ENCODE measurements at regions of chrX and their contacts with region 1.

Region 1: GRCh38 chrX:102950908-102951866 is 14.1 kb downstream of the RAB40AL start:
- DNase-seq: peak; percentile 27
- ATAC-seq: peak; percentile 86
- H3K4me3 ChIP-seq: no peak overlapping the region
- H3K27ac ChIP-seq: no peak overlapping the region
- H3K4me1 ChIP-seq: no peaks in the 10 kb centered on the region
- H3K27me3 ChIP-seq: peaks cover 2% of the 10 kb centered on the region; the same call in 1 of the 2 replicates
- CTCF ChIP-seq: peak; percentile 59
- POLR2A ChIP-seq: no peak
- RAD21 ChIP-seq: peak; percentile 49

Region 2: DNA sequence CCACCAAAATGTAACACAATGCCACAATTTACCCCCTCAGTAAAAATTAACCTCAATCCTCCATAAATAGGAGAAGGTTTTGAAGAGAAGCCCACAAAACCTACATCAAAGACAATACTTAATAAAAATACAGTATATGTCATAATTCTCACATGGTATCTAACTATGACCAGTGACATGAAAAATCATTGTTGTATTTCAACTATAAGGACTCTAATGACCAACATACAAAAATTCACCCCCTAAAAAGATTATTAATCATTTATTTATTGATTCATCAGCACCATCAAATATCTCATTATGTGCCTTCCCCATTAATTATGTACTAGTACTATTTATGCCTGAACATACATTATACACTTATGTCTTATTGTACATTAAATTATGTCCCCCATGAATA is 942.3 kb before region 1 on chrX:
- CTCF ChIA-PET with region 1: no interaction called
- POLR2A ChIA-PET with region 1: no interaction called
- dilution Hi-C with region 1: no loop called
- in situ Hi-C with region 1: no loop called
- intact Hi-C with region 1: no loop called
- DNase-seq: no peak
- ATAC-seq: no peak
- H3K4me3 ChIP-seq: no peak overlapping the region
- H3K27ac ChIP-seq: no peak overlapping the region
- H3K4me1 ChIP-seq: no peaks in the 10 kb centered on the region
- H3K27me3 ChIP-seq: no peaks in the 10 kb centered on the region
- CTCF ChIP-seq: no peak
- POLR2A ChIP-seq: no peak
- RAD21 ChIP-seq: no peak

Region 3: GRCh38 chrX:102840871-102841705 is 110.1 kb before region 1 on chrX:
- CTCF ChIA-PET with region 1: no interaction called
- POLR2A ChIA-PET with region 1: no interaction called
- dilution Hi-C with region 1: no loop called
- in situ Hi-C with region 1: no loop called
- intact Hi-C with region 1: no loop called
- DNase-seq: peak; percentile 34
- ATAC-seq: no peak
- H3K4me3 ChIP-seq: no peak overlapping the region
- H3K27ac ChIP-seq: no peak overlapping the region
- H3K4me1 ChIP-seq: no peaks in the 10 kb centered on the region
- H3K27me3 ChIP-seq: no peaks in the 10 kb centered on the region; the same call in 1 of the 2 replicates
- CTCF ChIP-seq: 0 out of 2 replicates have a peak, but pooled peaks have one; percentile 9
- POLR2A ChIP-seq: no peak
- RAD21 ChIP-seq: no peak

Region 4: DNA sequence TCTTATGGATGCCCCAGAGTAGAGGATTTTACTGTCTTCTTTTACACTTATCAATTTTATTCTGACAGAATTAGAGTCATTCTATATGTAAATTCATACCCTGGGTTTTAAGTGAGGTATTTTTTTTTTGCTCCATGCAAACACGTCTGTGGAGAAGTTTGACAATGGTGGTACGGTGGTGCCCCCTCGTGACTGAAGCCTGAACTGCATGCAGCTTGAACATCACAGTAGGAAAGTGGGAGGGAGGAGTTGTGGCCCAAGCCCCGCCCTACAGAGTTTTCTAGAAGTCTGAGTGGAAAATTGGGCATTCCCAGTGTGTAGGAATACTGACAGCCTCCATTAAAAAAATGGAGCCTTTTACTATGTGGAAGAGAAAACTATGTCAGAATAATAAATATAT is 87.5 kb before region 1 on chrX:
- CTCF ChIA-PET with region 1: no interaction called
- POLR2A ChIA-PET with region 1: no interaction called
- dilution Hi-C with region 1: no loop called
- in situ Hi-C with region 1: no loop called
- intact Hi-C with region 1: no loop called
- DNase-seq: peak; percentile 74
- ATAC-seq: peak; percentile 100
- H3K4me3 ChIP-seq: no peak overlapping the region
- H3K27ac ChIP-seq: no peak overlapping the region
- H3K4me1 ChIP-seq: no peaks in the 10 kb centered on the region
- H3K27me3 ChIP-seq: no peaks in the 10 kb centered on the region
- CTCF ChIP-seq: peak; percentile 85
- POLR2A ChIP-seq: no peak
- RAD21 ChIP-seq: peak; percentile 83

Region 5: DNA sequence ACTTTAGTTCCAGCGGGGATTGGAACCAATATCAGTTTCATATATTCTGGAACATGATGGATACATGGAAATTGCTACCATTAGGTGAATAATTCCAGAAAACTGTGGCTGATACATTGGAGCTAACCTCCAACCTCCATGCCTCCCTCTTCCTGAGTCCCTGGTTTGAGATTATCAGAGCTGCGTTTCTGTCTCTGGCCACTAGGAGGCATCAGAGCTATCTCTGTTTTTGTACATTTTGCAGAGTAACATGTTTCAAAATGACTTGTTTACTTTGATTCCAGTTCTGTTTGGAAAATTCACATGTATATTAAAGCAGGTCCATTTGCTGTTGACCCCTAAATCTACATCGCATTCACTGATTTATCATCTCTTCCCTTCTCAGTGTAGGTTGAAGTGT is 16.6 kb before region 1 on chrX:
- CTCF ChIA-PET with region 1: interaction called, 12 read pairs
- POLR2A ChIA-PET with region 1: no interaction called
- dilution Hi-C with region 1: no loop called
- in situ Hi-C with region 1: no loop called
- intact Hi-C with region 1: no loop called
- DNase-seq: peak; percentile 4
- ATAC-seq: peak; percentile 49; the same call in 1 of the 2 replicates
- H3K4me3 ChIP-seq: no peak overlapping the region
- H3K27ac ChIP-seq: no peak overlapping the region
- H3K4me1 ChIP-seq: no peaks in the 10 kb centered on the region
- H3K27me3 ChIP-seq: no peaks in the 10 kb centered on the region
- CTCF ChIP-seq: peak; percentile 45
- POLR2A ChIP-seq: no peak
- RAD21 ChIP-seq: peak; percentile 16; the same call in 1 of the 2 replicates

Region 6: GRCh38 chrX:103063918-103064434 is 112.8 kb after region 1 on chrX and contains the start of gene BEX1:
- CTCF ChIA-PET with region 1: no interaction called
- POLR2A ChIA-PET with region 1: no interaction called
- dilution Hi-C with region 1: no loop called
- in situ Hi-C with region 1: no loop called
- intact Hi-C with region 1: no loop called
- DNase-seq: no peak
- ATAC-seq: no peak
- H3K4me3 ChIP-seq: no peak within 1 kb of the TSS
- H3K27ac ChIP-seq: no peak within 1 kb of the TSS
- H3K4me1 ChIP-seq: no peaks in the 10 kb centered on the region
- H3K27me3 ChIP-seq: no peaks in the 10 kb centered on the region; the same call in 1 of the 2 replicates
- CTCF ChIP-seq: no peak
- POLR2A ChIP-seq: no peak
- RAD21 ChIP-seq: no peak
- total RNA-seq, gene BEX1: 0.18 TPM in 1 of 2 replicates, not detected in the other

Region 7: GRCh38 chrX:103157496-103158320 is 206.5 kb after region 1 on chrX:
- CTCF ChIA-PET with region 1: interaction called, 5 read pairs
- POLR2A ChIA-PET with region 1: no interaction called
- dilution Hi-C with region 1: no loop called
- in situ Hi-C with region 1: loop called (anchors 10 kb)
- intact Hi-C with region 1: loop called (anchors 1 kb)
- DNase-seq: peak; percentile 27
- ATAC-seq: peak; percentile 75
- H3K4me3 ChIP-seq: no peak overlapping the region
- H3K27ac ChIP-seq: no peak overlapping the region
- H3K4me1 ChIP-seq: no peaks in the 10 kb centered on the region
- H3K27me3 ChIP-seq: peaks cover 4% of the 10 kb centered on the region
- CTCF ChIP-seq: peak; percentile 59
- POLR2A ChIP-seq: no peak
- RAD21 ChIP-seq: peak; percentile 31; the same call in 1 of the 2 replicates

Region 8: GRCh38 chrX:103175944-103176753 is 225.0 kb after region 1 on chrX:
- CTCF ChIA-PET with region 1: interaction called, 11 read pairs
- POLR2A ChIA-PET with region 1: no interaction called
- dilution Hi-C with region 1: no loop called
- in situ Hi-C with region 1: no loop called
- intact Hi-C with region 1: loop called (anchors 1 kb)
- DNase-seq: peak; percentile 38
- ATAC-seq: peak; percentile 91
- H3K4me3 ChIP-seq: no peak overlapping the region
- H3K27ac ChIP-seq: no peak overlapping the region
- H3K4me1 ChIP-seq: no peaks in the 10 kb centered on the region
- H3K27me3 ChIP-seq: peaks cover 10% of the 10 kb centered on the region; the same call in 1 of the 2 replicates
- CTCF ChIP-seq: peak; percentile 73
- POLR2A ChIP-seq: no peak
- RAD21 ChIP-seq: peak; percentile 63

Region 9: DNA sequence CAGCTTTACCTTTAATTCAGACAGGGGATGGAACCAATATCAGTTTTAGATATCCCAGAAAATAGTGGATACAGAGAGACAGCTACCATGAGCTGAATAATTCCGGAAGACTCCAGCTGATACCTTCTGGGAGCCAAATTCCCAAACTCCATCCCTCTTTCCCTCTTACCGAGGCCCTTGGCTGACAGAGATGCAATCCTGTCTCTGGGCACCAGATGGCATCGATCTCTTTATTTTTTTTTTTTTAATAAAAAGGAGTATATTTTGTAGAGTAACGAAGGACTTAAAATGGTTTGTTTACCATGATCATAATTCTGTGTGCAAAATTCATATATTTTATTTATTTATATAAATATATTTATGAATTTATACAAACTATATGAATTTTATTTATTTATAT is 537.1 kb after region 1 on chrX:
- CTCF ChIA-PET with region 1: interaction called, 3 read pairs
- POLR2A ChIA-PET with region 1: no interaction called
- dilution Hi-C with region 1: no loop called
- in situ Hi-C with region 1: no loop called
- intact Hi-C with region 1: loop called (anchors 10 kb)
- DNase-seq: no peak
- ATAC-seq: no peak
- H3K4me3 ChIP-seq: no peak overlapping the region
- H3K27ac ChIP-seq: no peak overlapping the region
- H3K4me1 ChIP-seq: no peaks in the 10 kb centered on the region
- H3K27me3 ChIP-seq: no peaks in the 10 kb centered on the region
- CTCF ChIP-seq: peak; percentile 41
- POLR2A ChIP-seq: no peak
- RAD21 ChIP-seq: no peak; the same call in 1 of the 2 replicates